Calu3 (cell line): ENCODE measurements at regions of chr1 and their contacts with region 1.

Region 1: DNA sequence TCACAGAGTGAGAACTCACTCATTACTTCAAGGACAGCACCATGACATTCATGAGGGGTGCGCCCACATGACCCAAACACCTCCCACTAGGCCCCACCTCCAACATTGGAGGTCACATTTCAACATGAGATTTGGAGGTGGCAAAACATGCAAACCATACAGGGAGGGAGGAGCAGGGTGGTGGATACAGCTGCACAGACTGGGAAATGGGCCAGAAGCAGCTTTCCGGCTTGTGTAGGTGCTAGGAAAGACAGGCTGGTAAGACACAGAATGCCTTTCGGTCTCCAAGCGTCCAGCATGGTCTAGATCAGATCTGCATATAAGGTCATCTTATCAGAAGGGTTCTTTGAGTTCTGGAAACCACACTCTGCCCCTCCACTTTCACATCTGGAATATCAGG is 35.1 kb upstream of the TINAGL1 start:
- DNase-seq: no peak
- H3K4me3 Mint-ChIP-seq: no peak overlapping the region
- H3K27ac Mint-ChIP-seq: no peak overlapping the region
- H3K4me1 Mint-ChIP-seq: peaks cover 8% of the 10 kb centered on the region
- H3K27me3 Mint-ChIP-seq: peaks cover 16% of the 10 kb centered on the region
- CTCF ChIP-seq: no peak

Region 2: DNA sequence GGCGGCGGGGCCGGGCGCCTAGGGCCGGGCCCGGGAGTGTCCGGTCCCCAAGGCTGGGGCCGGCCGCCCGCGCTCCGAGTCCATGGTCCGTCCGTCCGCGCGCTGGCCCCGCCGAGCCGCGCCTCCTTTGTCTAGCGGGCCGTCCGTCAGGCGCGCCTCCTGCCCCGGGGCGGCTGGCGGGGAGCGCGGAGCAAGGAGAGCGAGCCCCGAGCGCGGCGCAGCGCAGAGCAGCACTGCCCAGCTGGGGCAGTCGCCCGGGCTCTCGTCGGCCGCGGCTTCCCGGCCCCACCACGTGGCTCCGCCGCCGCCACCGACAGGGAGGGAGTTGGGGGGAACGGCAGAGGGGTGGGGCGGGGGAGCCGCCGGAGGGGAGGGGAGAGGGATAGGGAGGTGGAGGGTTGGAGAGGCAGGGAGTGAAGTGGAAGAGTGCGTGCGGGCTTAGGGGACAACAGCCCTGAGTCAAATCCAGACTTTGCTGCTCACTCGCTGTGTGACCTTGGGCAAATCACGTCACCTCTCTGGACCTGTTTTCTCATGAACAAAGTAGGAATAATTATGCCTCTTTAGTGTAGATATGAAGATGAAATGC is 301.4 kb before region 1 on chr1 and contains the start of gene NKAIN1:
- CTCF ChIA-PET with region 1: no interaction called
- intact Hi-C with region 1: no loop called
- DNase-seq: peak; percentile 36
- H3K4me3 Mint-ChIP-seq: peak within 1 kb of the TSS; percentile 71
- H3K27ac Mint-ChIP-seq: no peak within 1 kb of the TSS
- H3K4me1 Mint-ChIP-seq: peaks cover 8% of the 10 kb centered on the region
- H3K27me3 Mint-ChIP-seq: peaks cover 90% of the 10 kb centered on the region
- CTCF ChIP-seq: no peak
- total RNA-seq, gene NKAIN1: not detected in 2 replicates

Region 3: DNA sequence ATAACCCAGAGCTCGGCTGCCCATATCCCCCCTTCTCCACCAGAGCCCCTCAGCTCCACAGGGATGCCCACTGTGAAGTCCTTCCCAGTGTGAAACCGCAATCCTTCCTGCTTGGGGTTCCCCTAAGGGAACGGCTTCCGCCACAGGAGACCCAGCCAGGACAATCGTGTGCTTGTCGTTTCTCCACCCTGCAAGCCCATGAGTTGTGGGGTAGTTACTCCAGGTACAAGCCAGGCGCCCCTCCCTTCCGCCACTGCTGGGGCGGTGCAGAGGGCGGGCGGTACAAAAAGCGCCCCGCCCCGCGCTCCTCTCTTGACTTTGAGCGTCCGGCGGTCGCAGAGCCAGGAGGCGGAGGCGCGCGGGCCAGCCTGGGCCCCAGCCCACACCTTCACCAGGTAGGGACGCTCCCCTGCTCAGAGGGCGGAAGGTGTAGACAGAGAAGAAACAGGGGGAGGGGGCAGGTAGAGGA is 35.0 kb after region 1 on chr1 and contains the start of gene TINAGL1:
- CTCF ChIA-PET with region 1: interaction called, 10 read pairs
- intact Hi-C with region 1: no loop called
- DNase-seq: peak; percentile 95
- H3K4me3 Mint-ChIP-seq: no peak within 1 kb of the TSS
- H3K27ac Mint-ChIP-seq: no peak within 1 kb of the TSS
- H3K4me1 Mint-ChIP-seq: peaks cover 51% of the 10 kb centered on the region
- H3K27me3 Mint-ChIP-seq: no peaks in the 10 kb centered on the region
- CTCF ChIP-seq: no peak
- total RNA-seq, gene TINAGL1: 388 and 430 TPM in 2 replicates